ENCODE measurements at regions of chr5 and their contacts with region 1.

Region 1: GRCh38 chr5:150662731-150663516 is 1.9 kb downstream of the MYOZ3 start:
- DNase-seq: no peak

Region 2: GRCh38 chr5:150645077-150645700 is 17.7 kb before region 1 on chr5:
- intact Hi-C with region 1: no loop called
- DNase-seq: peak; percentile 93

Region 3: GRCh38 chr5:150710165-150710564 is 47.2 kb after region 1 on chr5:
- intact Hi-C with region 1: loop called in 1 of 2 experiments (anchors 1 kb)
- DNase-seq: no peak

Measured in posterior vena cava (tissue), 2 donors.